ENCODE measurements at regions of chr9 and their contacts with region 1.

Region 1: DNA sequence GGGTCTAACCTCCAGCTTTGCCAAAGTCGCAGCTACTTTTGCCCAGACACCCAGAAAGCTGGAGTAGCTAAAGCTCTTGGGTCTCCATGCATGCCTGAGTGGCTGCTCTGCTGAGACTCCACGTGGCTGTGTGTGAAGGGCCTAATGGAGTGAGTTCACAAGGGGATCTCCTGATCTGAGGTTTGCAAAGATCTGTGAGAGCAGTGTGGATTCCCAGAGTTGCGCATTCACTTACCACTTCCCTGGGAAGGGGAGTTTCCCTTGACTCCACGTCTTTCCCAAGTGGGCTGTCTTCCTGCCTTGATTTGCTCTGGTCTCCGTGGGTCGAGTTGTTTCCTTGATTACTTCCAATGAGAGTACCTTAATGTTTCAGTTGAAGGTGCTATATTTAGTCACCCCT is 17.6 kb upstream of the CDKN2B start:
- DNase-seq: no peak
- H3K4me3 ChIP-seq: no peak overlapping the region
- H3K4me3 Mint-ChIP-seq: no peak overlapping the region
- H3K27ac ChIP-seq: no peak overlapping the region
- H3K27ac Mint-ChIP-seq: no peak overlapping the region
- H3K4me1 ChIP-seq: no peaks in the 10 kb centered on the region
- H3K4me1 Mint-ChIP-seq: peaks cover 0 to under 1% (median 0%) of the 10 kb centered on the region in 4 donors
- H3K27me3 ChIP-seq: no peaks in the 10 kb centered on the region
- H3K27me3 Mint-ChIP-seq: peaks cover 3 to 6% of the 10 kb centered on the region in 2 donors

Region 2: DNA sequence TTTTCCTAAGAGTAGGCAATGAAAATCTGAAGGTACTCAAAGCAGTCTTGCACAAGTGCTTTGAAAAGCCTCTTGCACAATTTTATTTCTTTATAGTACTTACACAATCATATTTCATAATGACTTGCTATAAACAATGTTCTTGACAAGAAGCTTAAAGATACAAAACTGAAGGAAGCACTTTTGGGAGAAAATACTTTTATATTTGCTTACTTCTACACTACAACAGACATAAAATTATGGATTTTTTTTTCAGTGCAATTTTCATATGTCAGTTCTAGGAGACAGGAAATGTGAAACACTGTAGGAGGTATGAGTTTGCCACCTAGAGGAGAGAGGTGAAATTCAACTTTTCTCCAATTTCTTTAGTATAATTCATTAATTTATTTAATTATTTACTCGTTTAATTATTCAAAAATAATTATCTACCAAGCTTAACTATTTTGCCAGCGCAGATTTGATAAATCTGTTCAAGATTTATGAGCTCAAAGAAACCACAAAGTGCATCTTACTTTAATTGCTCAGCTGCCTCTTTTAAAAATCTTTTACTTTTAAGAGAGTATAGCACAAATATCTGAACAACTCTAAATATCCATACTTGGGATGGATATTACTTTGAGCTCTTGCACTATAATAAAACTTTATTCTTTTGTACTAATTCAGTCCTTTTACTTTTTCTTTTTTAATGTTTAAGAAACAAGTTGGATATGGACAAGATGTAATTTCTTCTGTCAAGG is 11.4 kb after region 1 on chr9:
- CTCF ChIA-PET with region 1: interaction called, 14 read pairs
- POLR2A ChIA-PET with region 1: no interaction called
- intact Hi-C with region 1: no loop called
- DNase-seq: peak in 4 of 5 donors; percentile 22 to 39 (median 32)
- H3K4me3 ChIP-seq: no peak overlapping the region
- H3K4me3 Mint-ChIP-seq: no peak overlapping the region
- H3K27ac ChIP-seq: no peak overlapping the region
- H3K27ac Mint-ChIP-seq: no peak overlapping the region
- H3K4me1 ChIP-seq: peaks cover 11% of the 10 kb centered on the region
- H3K4me1 Mint-ChIP-seq: peaks cover 0 to 8% (median 4%) of the 10 kb centered on the region in 4 donors
- H3K27me3 ChIP-seq: no peaks in the 10 kb centered on the region
- H3K27me3 Mint-ChIP-seq: no peaks in the 10 kb centered on the region